Heart left ventricle (tissue), 16 donors: ENCODE measurements at regions of chr2 and their contacts with region 1.

Region 1: GRCh38 chr2:130288461-130289403 is 54.0 kb upstream of the IMP4 start:
- DNase-seq: no peak
- ATAC-seq: no peak
- H3K4me3 ChIP-seq: no peak overlapping the region
- H3K27ac ChIP-seq: no peak overlapping the region
- H3K4me1 ChIP-seq: no peaks in the 10 kb centered on the region
- H3K27me3 ChIP-seq: no peaks in the 10 kb centered on the region
- CTCF ChIP-seq: no peak
- POLR2A ChIP-seq: no peak

Region 2: GRCh38 chr2:129870685-129871241 is 418.0 kb before region 1 on chr2:
- intact Hi-C with region 1: no loop called
- DNase-seq: no peak
- ATAC-seq: no peak
- H3K4me3 ChIP-seq: no peak overlapping the region
- H3K27ac ChIP-seq: no peak overlapping the region
- H3K4me1 ChIP-seq: no peaks in the 10 kb centered on the region
- H3K27me3 ChIP-seq: no peaks in the 10 kb centered on the region
- CTCF ChIP-seq: no peak
- POLR2A ChIP-seq: no peak

Region 3: GRCh38 chr2:131366643-131367042 is 1077.9 kb after region 1 on chr2:
- intact Hi-C with region 1: loop called in 1 of 10 experiments (anchors 10 kb)
- DNase-seq: no peak
- ATAC-seq: peak in 1 of 4 donors; percentile 12
- H3K4me3 ChIP-seq: no peak overlapping the region
- H3K27ac ChIP-seq: no peak overlapping the region
- H3K4me1 ChIP-seq: no peaks in the 10 kb centered on the region
- H3K27me3 ChIP-seq: peaks cover 0 to 43% (median 16%) of the 10 kb centered on the region in 9 donors
- CTCF ChIP-seq: no peak
- POLR2A ChIP-seq: no peak